ENCODE measurements at regions of chr1 and their contacts with region 1.

Region 1: GRCh38 chr1:169601093-169601881 is 15.0 kb upstream of the F5 start:
- DNase-seq: peak in 3 of 14 experiments; percentile 49 to 59 (median 57)
- ATAC-seq: no peak
- H3K4me3 ChIP-seq: no peak overlapping the region
- H3K4me3 Mint-ChIP-seq: peak overlapping the region; percentile 7
- H3K27ac ChIP-seq: peak overlapping the region in 1 of 2 donors; percentile 9
- H3K27ac Mint-ChIP-seq: peak overlapping the region; percentile 77
- H3K4me1 ChIP-seq: peaks cover 40% of the 10 kb centered on the region
- H3K4me1 Mint-ChIP-seq: peaks cover 55% of the 10 kb centered on the region
- H3K27me3 ChIP-seq: no peaks in the 10 kb centered on the region
- H3K27me3 Mint-ChIP-seq: no peaks in the 10 kb centered on the region
- CTCF ChIP-seq: peak; percentile 84

Region 2: GRCh38 chr1:169557131-169557530 is 44.2 kb before region 1 on chr1:
- CTCF ChIA-PET with region 1: no interaction called
- POLR2A ChIA-PET with region 1: no interaction called
- intact Hi-C with region 1: no loop called
- DNase-seq: no peak
- ATAC-seq: no peak
- H3K4me3 ChIP-seq: no peak overlapping the region
- H3K4me3 Mint-ChIP-seq: no peak overlapping the region
- H3K27ac ChIP-seq: no peak overlapping the region
- H3K27ac Mint-ChIP-seq: no peak overlapping the region
- H3K4me1 ChIP-seq: no peaks in the 10 kb centered on the region
- H3K4me1 Mint-ChIP-seq: no peaks in the 10 kb centered on the region
- H3K27me3 ChIP-seq: no peaks in the 10 kb centered on the region
- H3K27me3 Mint-ChIP-seq: no peaks in the 10 kb centered on the region
- CTCF ChIP-seq: no peak

Region 3: GRCh38 chr1:169586395-169587255 is 14.7 kb before region 1 on chr1 and contains the start of gene F5:
- CTCF ChIA-PET with region 1: interaction called, 10 read pairs
- POLR2A ChIA-PET with region 1: interaction called, 16 read pairs
- intact Hi-C with region 1: loop called (anchors 2 kb)
- DNase-seq: peak; percentile 65 to 88 (median 72)
- ATAC-seq: peak; percentile 99
- H3K4me3 ChIP-seq: peak within 1 kb of the TSS; percentile 64
- H3K4me3 Mint-ChIP-seq: peak within 1 kb of the TSS; percentile 91
- H3K27ac ChIP-seq: no peak within 1 kb of the TSS
- H3K27ac Mint-ChIP-seq: peak within 1 kb of the TSS; percentile 71
- H3K4me1 ChIP-seq: peaks cover 19% of the 10 kb centered on the region
- H3K4me1 Mint-ChIP-seq: peaks cover 53% of the 10 kb centered on the region
- H3K27me3 ChIP-seq: no peaks in the 10 kb centered on the region
- H3K27me3 Mint-ChIP-seq: no peaks in the 10 kb centered on the region
- CTCF ChIP-seq: peak; percentile 71
- total RNA-seq, gene F5: 5.4 to 6.2 TPM

Region 4: DNA sequence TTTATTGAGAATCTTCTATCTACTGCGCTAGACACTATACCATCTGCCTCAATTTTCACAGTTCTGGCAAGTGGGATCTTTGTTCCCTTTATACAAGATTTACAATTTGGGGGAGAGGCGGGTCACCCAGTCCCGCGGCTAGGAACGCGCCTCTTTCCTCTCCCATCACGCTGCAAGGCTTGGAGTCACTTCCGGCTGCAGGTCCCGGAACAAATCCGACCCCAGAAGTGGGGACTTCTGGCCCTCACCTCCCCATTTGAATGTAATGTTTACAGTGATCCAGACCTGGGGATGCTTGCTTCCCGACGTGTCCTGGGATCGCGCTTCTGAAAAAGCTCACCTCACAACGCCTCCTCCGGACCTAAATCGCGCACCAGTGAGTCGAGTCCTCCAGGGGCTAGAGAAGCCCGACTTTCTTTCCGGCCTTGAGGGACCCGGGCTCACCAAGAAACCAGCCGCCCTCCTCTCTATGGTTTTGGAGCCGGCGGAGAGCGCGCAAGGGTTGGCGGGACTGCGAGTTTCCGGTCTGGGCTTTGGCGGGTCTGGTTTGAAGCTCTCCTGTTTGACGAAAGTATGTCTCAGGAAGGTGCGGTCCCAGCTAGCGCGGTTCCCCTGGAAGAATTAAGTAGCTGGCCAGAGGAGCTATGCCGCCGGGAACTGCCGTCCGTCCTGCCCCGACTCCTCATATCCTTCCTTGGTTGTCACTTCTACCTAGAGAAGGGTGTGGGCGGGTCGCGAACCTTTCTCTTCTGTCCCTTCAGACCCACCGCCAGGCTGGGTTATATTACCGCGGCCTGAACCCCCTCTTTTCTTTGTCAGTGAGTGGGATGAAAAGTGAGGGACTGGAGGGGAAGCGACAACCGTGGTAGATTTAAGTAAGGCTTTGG is 193.5 kb after region 1 on chr1 and contains the start of gene METTL18:
- CTCF ChIA-PET with region 1: no interaction called
- POLR2A ChIA-PET with region 1: interaction called, 5 read pairs
- intact Hi-C with region 1: loop called in 1 of 2 experiments (anchors 1 kb)
- DNase-seq: peak; percentile 82 to 96 (median 88)
- ATAC-seq: peak; percentile 97
- H3K4me3 ChIP-seq: peak within 1 kb of the TSS; percentile 81
- H3K4me3 Mint-ChIP-seq: peak within 1 kb of the TSS; percentile 99
- H3K27ac ChIP-seq: peak within 1 kb of the TSS; percentile 89 to 94
- H3K27ac Mint-ChIP-seq: peak within 1 kb of the TSS; percentile 94
- H3K4me1 ChIP-seq: peaks cover 13% of the 10 kb centered on the region
- H3K4me1 Mint-ChIP-seq: peaks cover 52% of the 10 kb centered on the region
- H3K27me3 ChIP-seq: no peaks in the 10 kb centered on the region
- H3K27me3 Mint-ChIP-seq: no peaks in the 10 kb centered on the region
- CTCF ChIP-seq: no peak
- total RNA-seq, gene METTL18: 5.1 to 5.6 TPM